Activated CD4-positive, alpha-beta T cell treated with anti-CD3 and anti-CD28 coated beads, Interleukin-2, amount 10 ng/mL, durations not matched to agents 24 days and 14 days (primary cell): ENCODE measurements at regions of chr1 and their contacts with region 1.

Region 1: DNA sequence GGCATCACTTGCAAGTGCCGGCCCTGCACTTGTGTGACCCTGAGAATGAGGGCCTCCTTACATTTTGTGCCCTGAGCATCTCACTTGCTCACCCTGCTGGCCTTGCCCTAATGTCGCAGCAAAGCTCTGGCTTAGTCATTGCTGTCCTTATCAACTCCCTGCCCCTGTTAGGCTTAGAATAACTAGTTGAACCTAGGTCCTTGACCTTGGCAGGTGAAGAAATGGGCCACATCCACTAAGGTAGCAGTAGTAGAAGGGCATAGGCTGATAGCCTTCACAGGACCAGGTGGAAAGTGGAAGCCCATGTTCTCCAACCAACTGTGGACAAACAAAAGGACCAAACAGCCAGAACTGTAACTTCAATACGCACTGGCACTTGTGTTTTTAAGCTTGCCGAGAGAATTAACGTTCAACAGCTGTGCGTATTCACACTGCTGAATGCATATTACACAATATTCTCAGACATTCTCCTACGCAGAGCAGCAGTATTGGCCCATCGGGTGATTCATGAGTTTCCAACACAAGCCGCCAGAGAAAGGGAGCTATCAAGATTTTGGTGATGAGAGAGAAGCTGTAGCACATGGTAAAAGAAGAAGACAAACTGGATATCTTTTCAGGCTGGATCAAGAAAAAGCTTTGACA is 27.7 kb upstream of the PTGFRN start:
- DNase-seq: peak; percentile 82
- H3K4me3 Mint-ChIP-seq: no peak overlapping the region
- H3K27ac Mint-ChIP-seq: no peak overlapping the region
- H3K4me1 Mint-ChIP-seq: peaks cover 28% of the 10 kb centered on the region
- H3K27me3 Mint-ChIP-seq: no peaks in the 10 kb centered on the region

Region 2: DNA sequence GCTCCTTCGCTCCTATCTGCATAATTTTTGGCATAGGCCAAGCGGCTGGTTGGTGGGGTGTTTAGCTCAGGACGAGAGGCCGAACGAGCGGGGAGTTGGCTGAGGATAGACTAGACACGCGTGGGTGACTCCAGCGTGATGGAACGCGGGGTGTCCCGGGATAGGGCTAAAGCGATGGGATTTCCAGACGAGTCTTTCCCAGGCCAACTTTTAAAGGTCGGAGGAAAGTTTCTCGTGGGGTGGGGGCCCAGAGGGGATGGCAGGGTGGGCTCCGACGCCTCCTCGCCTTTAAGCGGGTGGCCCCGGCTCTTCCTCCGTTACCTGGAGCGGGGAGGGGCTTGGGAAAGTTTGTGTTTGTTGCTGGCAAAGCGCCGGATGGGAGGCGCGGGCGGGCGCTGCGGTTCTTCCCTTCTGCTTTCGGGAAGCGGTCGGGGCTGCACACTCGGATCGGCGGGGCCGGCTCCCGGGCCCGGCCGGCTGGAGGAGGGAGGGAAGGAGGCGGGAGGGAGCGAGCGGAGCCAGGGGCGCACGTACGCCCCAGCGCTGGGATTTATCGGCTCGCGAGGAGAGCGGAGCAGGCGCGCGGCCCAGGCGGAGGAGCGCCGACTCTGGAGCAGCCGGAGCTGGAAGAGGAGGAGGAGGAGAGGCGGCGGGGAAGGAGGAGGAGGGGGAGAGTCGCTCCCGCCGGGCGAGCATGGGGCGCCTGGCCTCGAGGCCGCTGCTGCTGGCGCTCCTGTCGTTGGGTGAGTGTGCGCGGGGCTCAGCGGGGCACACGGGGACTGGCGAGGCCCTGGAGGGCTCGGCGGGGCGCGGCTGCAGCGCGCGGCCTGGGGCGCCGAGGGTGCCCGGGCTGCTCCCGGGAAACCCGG is 27.7 kb after region 1 on chr1 and contains the start of gene PTGFRN:
- intact Hi-C with region 1: loop called (anchors 5 kb)
- DNase-seq: peak; percentile 71
- H3K4me3 Mint-ChIP-seq: peak within 1 kb of the TSS; percentile 85
- H3K27ac Mint-ChIP-seq: peak within 1 kb of the TSS; percentile 79
- H3K4me1 Mint-ChIP-seq: peaks cover 6% of the 10 kb centered on the region
- H3K27me3 Mint-ChIP-seq: peaks cover 6% of the 10 kb centered on the region
- total RNA-seq, gene PTGFRN: 35.4 and 35.6 TPM in 2 replicates

Region 3: GRCh38 chr1:116934586-116935207 is 52.7 kb after region 1 on chr1:
- intact Hi-C with region 1: loop called (anchors 2 kb)
- DNase-seq: no peak
- H3K4me3 Mint-ChIP-seq: peak overlapping the region; percentile 36
- H3K27ac Mint-ChIP-seq: peak overlapping the region; percentile 74
- H3K4me1 Mint-ChIP-seq: peaks cover 28% of the 10 kb centered on the region
- H3K27me3 Mint-ChIP-seq: no peaks in the 10 kb centered on the region